Right lobe of liver (tissue), 6 donors: ENCODE measurements at regions of chr1 and their contacts with region 1.

Region 1: GRCh38 chr1:19485362-19486187 is at the start of gene CAPZB:
- DNase-seq: peak; percentile 97 to 98 (median 97)
- ATAC-seq: peak; percentile 86 to 91 (median 89)
- H3K4me3 ChIP-seq: peak within 1 kb of the TSS; percentile 75 to 97 (median 97)
- H3K27ac ChIP-seq: peak within 1 kb of the TSS; percentile 95 to 96 (median 96)
- H3K4me1 ChIP-seq: peaks cover 0 to 42% (median 11%) of the 10 kb centered on the region in 4 donors
- H3K27me3 ChIP-seq: no peaks in the 10 kb centered on the region
- CTCF ChIP-seq: no peak
- POLR2A ChIP-seq: peak; percentile 91
- total RNA-seq, gene CAPZB: 53.5 to 117 (median 88.0) TPM

Region 2: DNA sequence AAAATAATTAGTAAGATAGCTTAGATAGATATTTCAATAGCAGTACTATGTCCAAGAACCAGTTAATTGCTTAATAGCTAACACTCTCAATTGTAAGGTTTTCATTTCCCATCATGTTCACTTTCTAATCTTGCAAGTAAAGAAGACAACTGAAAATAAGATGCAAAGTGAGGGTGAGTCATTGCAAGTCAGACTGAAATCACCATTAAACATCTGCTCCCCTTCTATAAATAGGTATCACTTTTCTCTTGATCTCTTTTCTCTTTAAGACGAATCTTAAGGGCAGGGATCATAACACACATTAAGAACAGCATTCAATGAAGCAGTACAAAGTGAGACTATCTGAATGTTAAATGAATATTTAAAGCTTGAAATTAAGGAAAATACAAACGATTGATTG is 315.9 kb before region 1 on chr1:
- intact Hi-C with region 1: no loop called
- DNase-seq: no peak
- ATAC-seq: no peak
- H3K4me3 ChIP-seq: no peak overlapping the region
- H3K27ac ChIP-seq: no peak overlapping the region
- H3K4me1 ChIP-seq: peaks cover 0 to 9% (median 0%) of the 10 kb centered on the region in 4 donors
- H3K27me3 ChIP-seq: no peaks in the 10 kb centered on the region
- CTCF ChIP-seq: no peak
- POLR2A ChIP-seq: no peak

Region 3: DNA sequence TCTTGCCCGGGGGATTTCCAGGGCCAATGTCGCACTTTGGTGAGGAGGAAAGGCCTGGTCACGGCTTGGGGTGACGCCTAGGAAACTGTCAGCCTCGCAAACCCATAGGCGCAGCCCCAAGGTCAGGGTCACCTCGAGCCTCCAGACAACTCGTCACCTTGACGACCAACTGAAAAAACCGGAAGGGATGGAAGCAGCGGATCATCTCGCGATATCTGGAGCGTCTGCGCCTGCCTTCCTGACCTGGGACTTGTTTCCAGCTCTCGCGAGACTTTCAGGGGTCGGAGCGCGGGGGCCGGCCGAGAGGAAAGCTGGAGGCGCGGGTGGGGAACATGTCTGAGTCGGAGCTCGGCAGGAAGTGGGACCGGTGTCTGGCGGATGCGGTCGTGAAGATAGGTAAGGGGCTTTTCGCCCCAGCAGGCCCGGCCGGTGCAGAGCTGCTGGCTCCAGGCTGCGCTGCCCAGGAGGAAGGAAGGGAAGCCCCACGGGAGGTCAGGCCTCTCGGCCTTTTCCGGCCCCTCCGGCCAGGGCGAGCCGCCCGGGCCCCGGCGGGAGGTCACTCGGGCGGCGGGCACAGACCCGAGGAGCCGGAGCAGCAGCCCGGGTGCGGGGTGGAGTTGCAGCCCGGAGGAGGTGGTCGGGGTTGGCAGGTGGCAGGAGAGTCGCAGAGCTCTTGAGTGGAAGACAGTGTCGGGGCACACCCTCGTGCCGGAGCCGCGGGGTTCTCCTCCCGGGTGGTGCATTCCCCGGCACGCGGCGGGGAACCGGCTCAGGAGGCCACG is 111.3 kb after region 1 on chr1:
- intact Hi-C with region 1: loop called in 1 of 2 experiments (anchors 5 kb)
- DNase-seq: peak; percentile 95 to 97 (median 97)
- ATAC-seq: peak; percentile 93 to 96 (median 96)
- H3K4me3 ChIP-seq: peak overlapping the region; percentile 79 to 92 (median 92)
- H3K27ac ChIP-seq: peak overlapping the region; percentile 66 to 88 (median 80)
- H3K4me1 ChIP-seq: peaks cover 0 to 15% (median 4%) of the 10 kb centered on the region in 4 donors
- H3K27me3 ChIP-seq: no peaks in the 10 kb centered on the region
- CTCF ChIP-seq: no peak
- POLR2A ChIP-seq: peak; percentile 80

Region 4: GRCh38 chr1:19643602-19644394 is 158.2 kb after region 1 on chr1 and contains the start of gene NBL1:
- intact Hi-C with region 1: loop called in 1 of 2 experiments (anchors 10 kb)
- DNase-seq: peak in 1 of 3 donors; percentile 67
- ATAC-seq: peak; percentile 46 to 73 (median 59)
- H3K4me3 ChIP-seq: peak within 1 kb of the TSS; percentile 38 to 46 (median 46)
- H3K27ac ChIP-seq: peak within 1 kb of the TSS in 2 of 3 donors; percentile 24 to 57
- H3K4me1 ChIP-seq: peaks cover 0 to 14% (median 0%) of the 10 kb centered on the region in 4 donors
- H3K27me3 ChIP-seq: no peaks in the 10 kb centered on the region
- CTCF ChIP-seq: no peak
- POLR2A ChIP-seq: no peak
- total RNA-seq, gene NBL1: 2.2 to 5.7 (median 3.4) TPM